GM10248 (cell line): ENCODE measurements at regions of chr11 and their contacts with region 1.

Region 1: DNA sequence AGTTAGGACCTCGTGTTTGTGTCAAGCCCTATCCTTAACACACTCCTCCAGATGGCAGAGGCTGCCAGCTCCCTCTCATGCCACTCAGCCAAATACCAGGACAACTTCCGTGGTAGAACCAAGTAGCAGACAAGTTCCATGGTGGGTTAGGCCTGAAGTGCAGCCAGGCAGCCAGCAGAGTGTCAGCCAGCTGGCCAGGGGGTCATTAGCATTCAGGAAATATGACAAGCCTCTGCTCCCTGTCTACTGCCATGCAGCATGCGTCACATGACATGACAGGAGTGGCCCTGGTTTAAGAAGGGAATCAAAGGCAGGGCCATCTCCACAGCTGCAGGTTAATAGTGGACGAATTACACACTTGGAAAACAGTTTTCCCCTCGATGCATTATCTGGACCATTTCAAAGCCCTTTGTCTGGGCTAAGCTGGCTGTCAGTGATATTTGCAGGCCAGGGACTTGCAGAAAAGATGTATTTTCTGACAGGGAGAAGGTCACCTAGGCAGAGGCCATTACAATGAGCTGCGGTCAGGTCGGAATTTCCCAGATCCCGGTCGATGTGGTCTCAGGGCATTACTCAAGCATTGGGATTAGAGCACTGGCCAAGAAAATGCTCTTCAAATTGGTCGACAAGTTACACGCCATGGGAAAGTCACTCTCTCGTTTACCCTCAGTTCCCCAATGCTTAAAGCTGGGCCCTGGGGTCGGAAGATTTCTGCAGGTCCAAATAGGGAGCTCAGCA is 461.7 kb upstream of the CADM1 start:
- DNase-seq: no peak
- CTCF ChIP-seq: no peak

Region 2: DNA sequence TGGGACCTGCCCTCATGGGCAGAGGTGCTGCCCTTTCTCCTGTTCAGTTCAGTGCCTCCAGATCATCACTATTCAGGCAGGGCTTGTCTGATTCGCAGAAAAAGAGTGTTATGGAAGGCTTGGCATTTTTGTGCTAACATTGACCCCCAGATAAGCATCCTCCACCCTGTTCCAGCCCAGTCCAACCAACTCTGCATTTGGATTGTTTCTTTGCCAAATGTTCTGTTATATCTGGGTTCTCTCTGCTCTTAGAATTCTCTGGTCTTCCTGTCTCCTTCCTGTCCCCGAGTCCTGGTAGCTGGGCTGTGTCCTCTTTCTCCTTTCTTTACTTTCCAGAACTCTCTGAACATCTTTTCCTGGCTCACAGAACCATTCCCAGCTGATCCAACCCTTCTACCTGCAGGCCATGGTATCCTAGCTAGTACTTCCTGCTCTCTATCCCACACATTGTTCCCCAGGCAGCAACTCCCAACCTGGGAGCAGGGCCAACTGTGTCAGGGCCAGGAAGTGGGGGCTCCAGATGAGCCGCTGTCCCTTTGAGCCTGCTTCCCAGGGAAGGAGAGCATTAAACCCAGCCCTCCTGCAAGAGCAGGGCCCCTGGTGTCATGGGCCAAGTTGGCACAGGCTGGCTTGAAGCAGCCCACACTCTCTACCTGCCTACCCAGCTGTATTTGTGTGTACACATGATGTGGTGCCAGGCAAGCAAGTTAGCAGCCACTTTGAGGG is 181.0 kb before region 1 on chr11:
- CTCF ChIA-PET with region 1: no interaction called
- POLR2A ChIA-PET with region 1: no interaction called
- DNase-seq: no peak
- CTCF ChIP-seq: no peak

Region 3: GRCh38 chr11:115950660-115951059 is 15.3 kb before region 1 on chr11:
- CTCF ChIA-PET with region 1: interaction called, 13 read pairs
- POLR2A ChIA-PET with region 1: no interaction called
- DNase-seq: no peak
- CTCF ChIP-seq: no peak